ENCODE measurements at regions of chr3 and their contacts with region 1.

Region 1: GRCh38 chr3:150409512-150410310 is 1.6 kb downstream of the TSC22D2 start:
- DNase-seq: peak; percentile 85
- ATAC-seq: peak; percentile 65

Region 2: GRCh38 chr3:150286390-150287147 is 123.1 kb before region 1 on chr3:
- intact Hi-C with region 1: no loop called
- DNase-seq: no peak
- ATAC-seq: peak; percentile 85

Region 3: GRCh38 chr3:150371741-150372254 is 37.9 kb before region 1 on chr3:
- intact Hi-C with region 1: loop called (anchors 2 kb)
- DNase-seq: no peak
- ATAC-seq: peak; percentile 96

Measured in Right ventricle myocardium superior (tissue), 1 donor.